HCT116 (cell line): ENCODE measurements at regions of chr18 and their contacts with region 1.

Region 1: GRCh38 chr18:59515147-59515546 is 156.1 kb upstream of the LMAN1 start:
- DNase-seq: no peak
- ATAC-seq: no peak
- H3K4me3 ChIP-seq: no peak overlapping the region
- H3K27ac ChIP-seq: no peak overlapping the region
- H3K4me1 ChIP-seq: peaks cover 3 to 5% of the 10 kb centered on the region in 2 experiments
- H3K27me3 ChIP-seq: peaks cover 45% of the 10 kb centered on the region
- CTCF ChIP-seq: no peak
- POLR2A ChIP-seq: no peak
- RAD21 ChIP-seq: no peak

Region 2: GRCh38 chr18:59564561-59564960 is 49.4 kb after region 1 on chr18:
- CTCF ChIA-PET with region 1: no interaction called
- POLR2A ChIA-PET with region 1: no interaction called
- RAD21 ChIA-PET with region 1: no interaction called
- intact Hi-C with region 1: loop called (anchors 1 kb)
- DNase-seq: no peak
- ATAC-seq: no peak
- H3K4me3 ChIP-seq: no peak overlapping the region
- H3K27ac ChIP-seq: no peak overlapping the region
- H3K4me1 ChIP-seq: no peaks in the 10 kb centered on the region
- H3K27me3 ChIP-seq: peaks cover 7% of the 10 kb centered on the region
- CTCF ChIP-seq: no peak
- POLR2A ChIP-seq: no peak
- RAD21 ChIP-seq: no peak